CD8-positive, alpha-beta memory T cell (primary cell): ENCODE measurements at regions of chr9 and their contacts with region 1.

Region 1: DNA sequence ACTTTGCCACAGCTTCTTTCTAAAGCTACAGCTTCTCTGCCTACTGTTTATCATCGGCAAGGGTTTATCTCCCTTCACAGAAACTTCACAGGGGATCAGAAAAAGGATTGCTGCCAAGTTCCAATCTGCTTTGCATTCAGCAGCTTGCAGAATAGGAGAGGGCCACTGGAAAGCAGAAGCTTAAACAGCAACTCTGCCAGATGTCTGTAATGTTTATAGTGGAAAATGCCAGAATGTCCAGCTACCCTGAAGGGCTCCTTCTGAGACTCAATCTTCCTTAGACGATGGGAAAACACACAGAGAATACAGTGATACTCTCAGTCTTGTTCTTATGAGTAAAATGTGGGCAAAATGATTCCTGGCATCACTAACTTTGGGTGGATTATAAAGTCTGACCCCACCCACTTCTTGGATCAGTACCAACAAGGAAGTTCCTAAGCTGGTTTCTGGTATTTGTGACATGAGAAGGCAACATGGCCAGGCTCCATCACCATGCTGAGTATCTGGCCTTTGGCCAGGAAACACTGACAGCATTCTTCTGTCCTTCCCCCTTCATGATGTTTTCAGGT is 19.0 kb downstream of the STOM start:
- DNase-seq: no peak
- H3K4me3 ChIP-seq: no peak overlapping the region
- H3K4me3 Mint-ChIP-seq: peak overlapping the region in 1 of 7 donors; percentile 4
- H3K27ac ChIP-seq: no peak overlapping the region
- H3K27ac Mint-ChIP-seq: peak overlapping the region in 1 of 8 donors; percentile 7
- H3K4me1 ChIP-seq: peaks cover 51% of the 10 kb centered on the region
- H3K4me1 Mint-ChIP-seq: peaks cover 58 to 77% (median 74%) of the 10 kb centered on the region in 3 donors
- H3K27me3 ChIP-seq: no peaks in the 10 kb centered on the region
- H3K27me3 Mint-ChIP-seq: no peaks in the 10 kb centered on the region

Region 2: GRCh38 chr9:121362813-121363621 is 11.9 kb after region 1 on chr9:
- CTCF ChIA-PET with region 1: interaction called, 12 read pairs
- POLR2A ChIA-PET with region 1: interaction called, 6 read pairs
- DNase-seq: no peak
- H3K4me3 ChIP-seq: no peak overlapping the region
- H3K4me3 Mint-ChIP-seq: peak overlapping the region; percentile 5 to 60 (median 42)
- H3K27ac ChIP-seq: no peak overlapping the region
- H3K27ac Mint-ChIP-seq: peak overlapping the region in 7 of 8 donors; percentile 20 to 85 (median 52)
- H3K4me1 ChIP-seq: peaks cover 53% of the 10 kb centered on the region
- H3K4me1 Mint-ChIP-seq: peaks cover 87 to 99% (median 98%) of the 10 kb centered on the region in 3 donors
- H3K27me3 ChIP-seq: no peaks in the 10 kb centered on the region
- H3K27me3 Mint-ChIP-seq: no peaks in the 10 kb centered on the region

Region 3: GRCh38 chr9:121369595-121370265 is 18.7 kb after region 1 on chr9 and contains the start of gene STOM:
- CTCF ChIA-PET with region 1: interaction called, 12 read pairs
- POLR2A ChIA-PET with region 1: interaction called, 16 read pairs
- DNase-seq: peak in 4 of 5 donors; percentile 58 to 88 (median 70)
- H3K4me3 ChIP-seq: peak within 1 kb of the TSS; percentile 86
- H3K4me3 Mint-ChIP-seq: peak within 1 kb of the TSS; percentile 92 to 99 (median 95)
- H3K27ac ChIP-seq: peak within 1 kb of the TSS; percentile 83
- H3K27ac Mint-ChIP-seq: peak within 1 kb of the TSS; percentile 93 to 98 (median 96)
- H3K4me1 ChIP-seq: peaks cover 37% of the 10 kb centered on the region
- H3K4me1 Mint-ChIP-seq: peaks cover 64 to 75% (median 74%) of the 10 kb centered on the region in 3 donors
- H3K27me3 ChIP-seq: no peaks in the 10 kb centered on the region
- H3K27me3 Mint-ChIP-seq: peaks cover 0 to 2% of the 10 kb centered on the region in 2 donors
- total RNA-seq, gene STOM: 63.0 to 67.3 TPM